Activated CD8-positive, alpha-beta T cell treated with anti-CD3 and anti-CD28 coated beads, Interleukin-2, amount 10 ng/mL, durations not matched to agents 7 days and 5 days (primary cell): ENCODE measurements at regions of chr19 and their contacts with region 1.

Region 1: DNA sequence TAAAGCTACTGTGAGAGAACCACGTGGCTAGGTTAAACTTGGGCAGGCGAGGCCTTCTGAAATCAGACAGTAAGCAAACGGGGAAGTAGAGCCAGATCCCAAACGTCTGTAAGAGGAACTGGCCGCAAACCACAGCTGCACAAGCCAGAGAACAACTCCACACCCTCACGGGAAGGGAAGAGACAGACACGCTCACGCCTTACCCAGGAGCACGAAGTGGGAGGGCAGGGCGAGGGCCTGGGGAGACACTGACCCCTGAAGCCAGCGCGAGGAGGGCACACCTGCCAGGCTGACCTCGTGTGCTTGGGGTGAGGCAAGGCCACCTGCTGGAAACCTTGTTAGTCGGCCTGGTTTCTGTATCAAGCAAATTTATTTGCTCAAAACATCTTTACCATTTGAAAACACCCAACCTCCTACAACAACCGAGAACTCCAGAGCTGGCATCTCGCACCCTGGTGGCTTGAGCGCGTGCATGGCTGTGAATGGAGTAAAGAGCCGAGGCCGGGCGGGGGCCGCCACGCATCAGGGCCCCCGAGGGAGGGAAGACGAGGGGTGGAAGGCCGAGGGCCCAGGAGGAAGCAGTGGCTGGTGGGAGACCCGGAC is 7.3 kb downstream of the POLR2E start:
- DNase-seq: peak; percentile 68
- ATAC-seq: peak; percentile 47
- H3K4me3 Mint-ChIP-seq: peak overlapping the region; percentile 56
- H3K27ac Mint-ChIP-seq: peak overlapping the region; percentile 83
- H3K4me1 Mint-ChIP-seq: peaks cover 72% of the 10 kb centered on the region
- H3K27me3 Mint-ChIP-seq: no peaks in the 10 kb centered on the region

Region 2: GRCh38 chr19:1074544-1075283 is 13.2 kb before region 1 on chr19:
- CTCF ChIA-PET with region 1: interaction called, 25 read pairs
- POLR2A ChIA-PET with region 1: interaction called, 103 read pairs
- DNase-seq: peak; percentile 91
- ATAC-seq: peak; percentile 15
- H3K4me3 Mint-ChIP-seq: peak overlapping the region; percentile 69
- H3K27ac Mint-ChIP-seq: peak overlapping the region; percentile 93
- H3K4me1 Mint-ChIP-seq: peaks cover 54% of the 10 kb centered on the region
- H3K27me3 Mint-ChIP-seq: no peaks in the 10 kb centered on the region

Region 3: DNA sequence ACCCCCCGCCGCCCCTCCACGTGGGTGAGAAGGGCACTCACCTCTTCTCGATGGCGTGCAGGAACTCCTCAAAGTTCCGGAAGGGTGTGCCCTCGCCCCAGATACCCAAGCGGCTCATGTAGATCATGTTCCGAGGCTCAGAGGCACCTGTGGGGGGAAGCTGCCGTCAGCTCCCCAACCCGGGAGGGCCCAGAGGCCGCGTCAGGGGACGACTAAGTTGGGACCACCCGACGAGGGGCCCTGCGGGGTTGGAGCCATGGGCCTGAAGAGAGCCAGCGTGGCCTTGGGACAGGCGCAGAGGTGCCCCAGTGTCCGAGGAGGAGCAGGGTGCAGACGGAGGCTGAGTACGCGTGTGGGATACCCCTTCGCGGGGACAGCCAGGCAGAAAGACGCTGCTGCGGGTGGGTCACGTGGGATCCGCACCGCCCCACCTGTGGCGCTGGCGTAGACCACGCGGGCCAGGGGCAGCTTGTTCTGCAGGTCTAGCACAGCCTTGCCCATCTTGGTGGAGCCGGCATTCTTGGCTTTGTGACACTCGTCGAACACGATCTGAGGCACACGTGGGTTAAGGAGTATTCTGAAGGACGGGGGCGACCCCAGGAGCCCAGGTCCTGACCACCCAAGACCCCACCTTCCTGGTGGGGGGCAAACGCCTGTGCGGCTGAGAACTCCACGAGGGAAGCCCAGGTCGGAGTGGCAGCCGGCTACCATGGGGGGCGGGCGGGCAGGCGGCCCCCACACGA is 31.7 kb after region 1 on chr19:
- CTCF ChIA-PET with region 1: no interaction called
- POLR2A ChIA-PET with region 1: no interaction called
- DNase-seq: no peak
- ATAC-seq: no peak
- H3K4me3 Mint-ChIP-seq: no peak overlapping the region
- H3K27ac Mint-ChIP-seq: no peak overlapping the region
- H3K4me1 Mint-ChIP-seq: no peaks in the 10 kb centered on the region
- H3K27me3 Mint-ChIP-seq: no peaks in the 10 kb centered on the region

Region 4: GRCh38 chr19:1220452-1221037 is 132.6 kb after region 1 on chr19:
- CTCF ChIA-PET with region 1: no interaction called
- POLR2A ChIA-PET with region 1: no interaction called
- DNase-seq: no peak
- ATAC-seq: no peak
- H3K4me3 Mint-ChIP-seq: no peak overlapping the region
- H3K27ac Mint-ChIP-seq: no peak overlapping the region
- H3K4me1 Mint-ChIP-seq: peaks cover 3% of the 10 kb centered on the region
- H3K27me3 Mint-ChIP-seq: no peaks in the 10 kb centered on the region